Right lobe of liver (tissue), 6 donors: ENCODE measurements at regions of chr6 and their contacts with region 1.

Region 1: GRCh38 chr6:150079604-150080003 is 10.7 kb upstream of the ULBP3 start:
- DNase-seq: no peak
- ATAC-seq: no peak
- H3K4me3 ChIP-seq: no peak overlapping the region
- H3K27ac ChIP-seq: no peak overlapping the region
- H3K4me1 ChIP-seq: no peaks in the 10 kb centered on the region
- H3K27me3 ChIP-seq: no peaks in the 10 kb centered on the region
- CTCF ChIP-seq: no peak
- POLR2A ChIP-seq: no peak

Region 2: DNA sequence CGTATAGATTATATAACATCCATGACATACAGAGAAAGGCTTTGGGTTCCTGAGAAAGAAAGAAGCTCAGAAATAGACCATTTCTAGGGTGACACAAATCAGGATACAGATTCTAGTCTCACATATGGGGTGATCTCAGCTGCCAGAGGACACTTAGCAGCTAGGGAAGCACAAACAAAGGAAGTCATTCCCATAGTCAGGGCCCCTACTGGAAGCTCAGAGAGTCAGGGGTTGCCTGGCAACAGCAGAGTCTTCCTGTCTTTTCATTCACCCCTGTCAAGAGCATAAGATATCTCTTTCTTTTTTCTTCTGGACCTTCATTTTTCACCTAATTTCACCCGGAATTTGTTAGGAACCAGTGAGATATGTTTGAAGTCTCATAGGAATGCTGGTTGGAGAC is 207.3 kb after region 1 on chr6:
- intact Hi-C with region 1: no loop called
- DNase-seq: no peak
- ATAC-seq: no peak
- H3K4me3 ChIP-seq: no peak overlapping the region
- H3K27ac ChIP-seq: no peak overlapping the region
- H3K4me1 ChIP-seq: no peaks in the 10 kb centered on the region
- H3K27me3 ChIP-seq: no peaks in the 10 kb centered on the region
- CTCF ChIP-seq: no peak
- POLR2A ChIP-seq: no peak

Region 3: GRCh38 chr6:150334790-150335783 is 255.5 kb after region 1 on chr6:
- intact Hi-C with region 1: loop called (anchors 5 kb)
- DNase-seq: no peak
- ATAC-seq: peak; percentile 62 to 70 (median 66)
- H3K4me3 ChIP-seq: no peak overlapping the region
- H3K27ac ChIP-seq: no peak overlapping the region
- H3K4me1 ChIP-seq: no peaks in the 10 kb centered on the region
- H3K27me3 ChIP-seq: no peaks in the 10 kb centered on the region
- CTCF ChIP-seq: peak; percentile 77 to 89 (median 82)
- POLR2A ChIP-seq: no peak

Region 4: GRCh38 chr6:150395398-150396009 is 315.9 kb after region 1 on chr6:
- intact Hi-C with region 1: loop called in 1 of 2 experiments (anchors 10 kb)
- DNase-seq: peak in 2 of 3 donors; percentile 37 to 61
- ATAC-seq: peak; percentile 48 to 66 (median 56)
- H3K4me3 ChIP-seq: no peak overlapping the region
- H3K27ac ChIP-seq: no peak overlapping the region
- H3K4me1 ChIP-seq: peaks cover 0 to 34% (median 15%) of the 10 kb centered on the region in 4 donors
- H3K27me3 ChIP-seq: no peaks in the 10 kb centered on the region
- CTCF ChIP-seq: peak; percentile 71 to 74 (median 74)
- POLR2A ChIP-seq: no peak